ENCODE measurements at regions of chr7 and their contacts with region 1.

Region 1: GRCh38 chr7:130896898-130897514 is 163.0 kb upstream of the KLF14 start:
- DNase-seq: peak; percentile 71 to 92
- H3K4me3 ChIP-seq: peak overlapping the region in 1 of 4 donors; percentile 6
- H3K27ac ChIP-seq: peak overlapping the region in 4 of 5 donors; percentile 76 to 85 (median 80)
- H3K4me1 ChIP-seq: peaks cover 65 to 98% (median 84%) of the 10 kb centered on the region in 4 donors
- H3K27me3 ChIP-seq: no peaks in the 10 kb centered on the region
- CTCF ChIP-seq: peak in 5 of 7 experiments; percentile 77 to 89 (median 82)
- EP300 ChIP-seq: no peak
- POLR2A ChIP-seq: no peak

Region 2: DNA sequence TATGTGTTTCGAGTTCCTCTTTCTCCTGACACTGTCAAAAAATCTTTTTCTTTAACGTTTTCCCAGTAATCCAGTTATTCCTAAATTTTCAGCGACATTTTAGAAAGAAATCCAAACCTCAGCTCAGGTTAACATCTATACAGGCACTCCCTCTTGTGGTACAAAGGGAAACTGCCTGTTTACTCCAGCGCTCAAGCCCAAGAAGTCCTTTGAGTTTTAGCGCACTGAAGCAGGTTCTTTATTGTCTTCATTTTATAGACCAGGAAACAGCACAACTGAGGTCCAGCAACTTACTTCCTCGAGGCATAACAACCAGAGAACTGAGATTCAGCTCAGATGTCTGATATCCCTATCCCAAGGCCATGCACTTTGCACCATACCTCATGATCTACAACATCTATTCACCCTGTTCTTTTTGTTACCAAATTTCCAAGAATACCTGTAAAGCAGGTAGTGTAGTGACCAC is 143.5 kb after region 1 on chr7:
- intact Hi-C with region 1: loop called (anchors 10 kb)
- DNase-seq: peak; percentile 62 to 84
- H3K4me3 ChIP-seq: no peak overlapping the region
- H3K27ac ChIP-seq: peak overlapping the region in 4 of 5 donors; percentile 12 to 48 (median 34)
- H3K4me1 ChIP-seq: peaks cover 15 to 52% (median 34%) of the 10 kb centered on the region in 4 donors
- H3K27me3 ChIP-seq: no peaks in the 10 kb centered on the region
- CTCF ChIP-seq: peak in 5 of 7 experiments; percentile 87 to 90 (median 88)
- EP300 ChIP-seq: no peak
- POLR2A ChIP-seq: no peak